Panc1 (cell line): ENCODE measurements at regions of chr14 and their contacts with region 1.

Region 1: DNA sequence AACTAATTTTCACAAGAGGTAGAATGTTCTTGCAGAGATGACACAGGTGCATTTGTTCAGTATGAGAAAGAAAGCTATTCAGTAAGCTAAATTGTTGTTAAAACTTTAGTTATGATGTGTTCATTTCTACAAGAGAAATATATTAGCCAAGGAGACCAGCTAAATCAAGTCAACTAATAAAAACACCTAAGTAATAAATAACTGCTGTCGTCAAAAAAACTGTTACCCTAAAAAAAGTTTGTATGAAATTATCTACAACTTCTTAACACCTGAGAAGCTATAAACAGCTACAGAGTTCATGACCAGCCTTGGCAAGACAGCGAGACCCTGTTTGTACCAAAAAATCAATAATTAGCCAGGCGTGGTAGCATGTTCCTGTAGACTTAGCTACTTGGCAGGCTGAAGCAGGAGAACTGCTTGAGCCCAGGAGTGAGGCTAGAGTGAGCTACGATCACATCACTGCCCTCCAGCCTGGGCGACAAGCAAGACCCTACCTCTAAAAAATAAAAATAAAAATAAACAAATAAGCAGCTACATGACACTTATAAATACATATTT is 67.6 kb upstream of the AP4S1 start:
- DNase-seq: no peak
- ATAC-seq: no peak
- H3K4me3 ChIP-seq: no peak overlapping the region
- H3K27ac ChIP-seq: no peak overlapping the region
- H3K4me1 ChIP-seq: no peaks in the 10 kb centered on the region
- H3K27me3 ChIP-seq: no peaks in the 10 kb centered on the region
- CTCF ChIP-seq: no peak

Region 2: GRCh38 chr14:30507209-30507608 is 450.7 kb before region 1 on chr14:
- CTCF ChIA-PET with region 1: no interaction called
- POLR2A ChIA-PET with region 1: no interaction called
- in situ Hi-C with region 1: no loop called
- intact Hi-C with region 1: no loop called
- DNase-seq: no peak
- ATAC-seq: no peak
- H3K4me3 ChIP-seq: no peak overlapping the region
- H3K27ac ChIP-seq: no peak overlapping the region
- H3K4me1 ChIP-seq: no peaks in the 10 kb centered on the region
- H3K27me3 ChIP-seq: no peaks in the 10 kb centered on the region
- CTCF ChIP-seq: no peak

Region 3: DNA sequence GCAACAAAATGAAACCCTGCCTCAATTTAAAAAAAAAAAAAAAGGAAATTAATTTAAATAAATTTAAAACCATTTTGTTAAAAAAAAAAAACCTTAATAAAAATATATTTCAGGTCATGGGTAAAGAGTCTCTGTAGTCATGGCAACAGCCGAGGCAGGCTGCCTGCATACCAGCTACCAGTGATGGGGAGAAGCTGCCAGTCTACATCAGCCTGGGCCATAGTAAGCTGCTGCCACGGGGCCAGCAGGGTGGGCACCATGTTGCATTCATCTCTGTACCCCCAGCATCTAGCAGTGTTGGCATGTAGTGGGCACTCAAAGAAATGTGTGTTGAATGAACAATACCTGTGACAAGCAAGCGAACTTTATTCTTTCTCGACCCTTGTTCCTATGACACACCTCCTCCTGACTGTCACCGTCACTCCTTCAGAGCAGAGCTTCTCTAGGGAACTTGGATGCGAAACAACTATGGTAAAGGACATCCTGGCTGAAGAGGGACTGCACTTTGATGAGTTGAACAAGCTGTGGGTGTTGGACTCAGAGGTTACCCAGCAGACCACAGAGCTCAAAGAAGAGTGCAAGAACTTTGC is 60.3 kb after region 1 on chr14:
- CTCF ChIA-PET with region 1: no interaction called
- POLR2A ChIA-PET with region 1: no interaction called
- in situ Hi-C with region 1: no loop called
- intact Hi-C with region 1: no loop called
- DNase-seq: no peak
- ATAC-seq: no peak
- H3K4me3 ChIP-seq: no peak overlapping the region
- H3K27ac ChIP-seq: no peak overlapping the region
- H3K4me1 ChIP-seq: no peaks in the 10 kb centered on the region
- H3K27me3 ChIP-seq: no peaks in the 10 kb centered on the region
- CTCF ChIP-seq: no peak

Region 4: DNA sequence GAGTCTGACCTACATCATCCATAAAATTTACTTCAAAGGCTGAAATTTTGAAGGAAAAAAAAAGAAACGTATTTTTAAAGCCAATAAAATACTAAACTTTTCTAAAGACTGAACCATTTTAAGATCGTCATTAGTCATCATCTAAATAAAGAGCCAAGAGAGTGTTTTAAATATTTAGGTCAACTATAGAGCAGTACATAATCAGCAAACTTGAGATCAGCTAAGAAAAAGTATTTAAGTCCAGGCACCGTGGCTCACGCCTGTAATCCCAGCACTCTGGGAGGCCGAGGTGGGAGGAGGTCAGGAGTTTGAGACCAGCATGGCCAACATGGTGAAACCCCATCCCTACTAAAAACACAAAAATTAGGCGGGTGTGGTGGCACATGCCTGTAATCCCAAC is 214.2 kb after region 1 on chr14:
- CTCF ChIA-PET with region 1: no interaction called
- POLR2A ChIA-PET with region 1: interaction called, 15 read pairs
- in situ Hi-C with region 1: no loop called
- intact Hi-C with region 1: no loop called
- DNase-seq: no peak
- ATAC-seq: no peak
- H3K4me3 ChIP-seq: no peak overlapping the region
- H3K27ac ChIP-seq: no peak overlapping the region
- H3K4me1 ChIP-seq: no peaks in the 10 kb centered on the region
- H3K27me3 ChIP-seq: no peaks in the 10 kb centered on the region
- CTCF ChIP-seq: no peak